ENCODE measurements at regions of chr12 and their contacts with region 1.

Region 1: GRCh38 chr12:12837025-12837872 is 24.1 kb downstream of the DDX47 start:
- DNase-seq: peak; percentile 83
- H3K4me3 Mint-ChIP-seq: no peak overlapping the region
- H3K27ac Mint-ChIP-seq: peak overlapping the region; percentile 30
- H3K4me1 Mint-ChIP-seq: peaks cover 56% of the 10 kb centered on the region
- H3K27me3 Mint-ChIP-seq: no peaks in the 10 kb centered on the region
- CTCF ChIP-seq: peak; percentile 62

Region 2: DNA sequence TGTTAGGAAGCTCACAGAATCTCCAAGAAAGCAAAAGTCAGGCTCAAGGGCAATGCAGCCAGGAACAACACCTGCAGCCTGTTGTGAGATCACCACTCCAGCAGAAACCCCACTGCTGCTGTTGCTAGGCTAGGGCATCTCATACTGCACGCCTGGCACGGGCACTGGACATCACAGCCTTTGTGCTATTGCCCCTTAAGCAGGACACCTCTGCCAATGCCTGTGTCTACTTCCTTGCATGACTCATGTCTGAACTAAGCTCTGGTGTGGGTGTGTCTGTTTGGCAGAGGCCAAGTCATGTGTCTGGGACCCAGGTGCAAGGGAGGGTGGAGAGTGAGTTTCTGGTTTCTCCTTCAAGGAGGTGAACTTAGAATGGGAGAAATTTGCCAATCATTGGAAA is 34.1 kb before region 1 on chr12:
- CTCF ChIA-PET with region 1: interaction called, 21 read pairs
- POLR2A ChIA-PET with region 1: interaction called, 27 read pairs
- intact Hi-C with region 1: no loop called
- DNase-seq: peak; percentile 99
- H3K4me3 Mint-ChIP-seq: peak overlapping the region; percentile 11
- H3K27ac Mint-ChIP-seq: peak overlapping the region; percentile 67
- H3K4me1 Mint-ChIP-seq: peaks cover 48% of the 10 kb centered on the region
- H3K27me3 Mint-ChIP-seq: no peaks in the 10 kb centered on the region
- CTCF ChIP-seq: no peak

Region 3: GRCh38 chr12:12872139-12872881 is 35.1 kb after region 1 on chr12:
- CTCF ChIA-PET with region 1: interaction called, 8 read pairs
- POLR2A ChIA-PET with region 1: interaction called, 22 read pairs
- intact Hi-C with region 1: no loop called
- DNase-seq: peak; percentile 49
- H3K4me3 Mint-ChIP-seq: no peak overlapping the region
- H3K27ac Mint-ChIP-seq: peak overlapping the region; percentile 77
- H3K4me1 Mint-ChIP-seq: peaks cover 32% of the 10 kb centered on the region
- H3K27me3 Mint-ChIP-seq: no peaks in the 10 kb centered on the region
- CTCF ChIP-seq: no peak

Region 4: DNA sequence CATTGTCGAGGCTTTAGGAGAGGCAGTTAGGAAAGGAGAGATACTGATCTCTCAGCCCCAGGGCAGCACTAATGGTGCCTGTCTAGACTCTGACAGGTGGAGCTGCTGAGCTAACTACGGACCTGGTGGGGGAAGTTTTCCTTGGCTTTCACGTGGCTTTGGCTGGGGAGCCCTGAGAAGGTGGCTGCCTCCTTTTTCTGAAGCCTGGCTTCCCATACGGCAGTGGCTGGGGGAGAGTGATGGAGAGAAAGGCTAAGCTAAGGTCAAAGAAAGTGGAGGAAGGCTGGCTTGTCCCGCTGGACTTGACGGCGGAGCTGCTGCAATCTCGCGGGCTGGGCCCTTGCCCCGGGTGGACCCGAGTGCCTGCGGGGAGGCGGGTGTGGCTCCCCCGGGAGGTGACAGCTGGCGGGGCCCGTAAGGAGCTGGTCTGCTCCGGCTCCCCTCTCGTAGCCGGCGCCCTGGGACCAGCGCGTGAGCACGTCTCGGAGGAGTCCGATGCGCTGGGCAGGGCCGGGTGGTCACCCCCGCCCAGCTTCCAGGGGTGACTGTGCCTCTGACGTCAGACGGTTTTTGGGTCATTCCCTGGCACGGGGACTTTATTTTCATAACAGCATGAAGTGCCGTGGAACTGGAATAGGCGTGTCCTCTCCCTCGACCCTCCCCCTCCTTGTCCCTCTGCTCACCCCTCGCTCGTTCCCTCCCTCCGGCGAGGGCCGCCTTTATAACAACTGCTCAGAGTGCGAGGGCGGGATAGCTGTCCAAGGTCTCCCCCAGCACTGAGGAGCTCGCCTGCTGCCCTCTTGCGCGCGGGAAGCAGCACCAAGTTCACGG is 53.8 kb after region 1 on chr12 and contains the start of gene GPRC5A:
- CTCF ChIA-PET with region 1: interaction called, 61 read pairs
- POLR2A ChIA-PET with region 1: interaction called, 123 read pairs
- intact Hi-C with region 1: loop called (anchors 1 kb)
- DNase-seq: peak; percentile 97
- H3K4me3 Mint-ChIP-seq: peak within 1 kb of the TSS; percentile 82
- H3K27ac Mint-ChIP-seq: peak within 1 kb of the TSS; percentile 87
- H3K4me1 Mint-ChIP-seq: peaks cover 31% of the 10 kb centered on the region
- H3K27me3 Mint-ChIP-seq: no peaks in the 10 kb centered on the region
- CTCF ChIP-seq: peak; percentile 30
- total RNA-seq, gene GPRC5A: 24.1 and 42.1 TPM in 2 replicates

Region 5: DNA sequence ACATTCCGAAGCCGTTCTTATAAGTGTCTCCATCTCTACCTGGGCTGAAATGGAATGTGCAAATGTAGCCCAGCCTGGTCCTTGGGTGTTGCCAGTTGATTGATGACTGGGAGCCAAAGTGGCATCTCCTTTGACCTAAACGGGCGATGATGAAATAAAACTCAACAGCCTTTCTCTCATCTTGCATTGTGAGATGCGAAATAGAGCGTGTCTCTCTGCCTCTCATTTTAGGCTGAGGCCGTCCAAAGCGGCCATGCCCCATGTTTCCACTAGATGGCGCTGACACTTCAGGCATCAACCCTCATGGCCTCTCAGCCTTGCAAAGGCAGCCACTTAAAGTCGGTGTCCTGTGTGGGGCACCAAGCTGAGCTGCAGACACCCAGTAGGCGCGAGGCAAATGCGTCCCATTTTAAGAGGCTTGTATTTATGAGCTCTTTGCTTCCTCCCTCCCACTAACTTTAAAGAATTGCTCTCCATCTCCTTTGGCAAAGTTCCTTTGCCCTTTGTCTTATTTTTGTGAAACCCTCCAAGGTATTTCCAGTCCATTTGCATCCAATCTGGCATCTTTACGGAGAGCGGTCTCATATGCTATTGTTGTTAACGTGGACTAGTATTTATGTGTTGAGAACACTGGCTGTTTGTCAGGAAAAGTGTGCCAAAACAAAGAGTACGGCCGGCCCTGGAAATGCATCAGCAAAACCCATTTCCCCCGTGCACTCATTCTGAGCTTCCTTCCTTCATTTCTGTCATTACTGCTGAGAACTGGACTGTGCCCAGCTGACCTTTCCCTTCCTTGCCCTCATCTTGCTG is 79.1 kb after region 1 on chr12:
- CTCF ChIA-PET with region 1: interaction called, 27 read pairs
- POLR2A ChIA-PET with region 1: no interaction called
- intact Hi-C with region 1: no loop called
- DNase-seq: peak; percentile 83
- H3K4me3 Mint-ChIP-seq: no peak overlapping the region
- H3K27ac Mint-ChIP-seq: no peak overlapping the region
- H3K4me1 Mint-ChIP-seq: no peaks in the 10 kb centered on the region
- H3K27me3 Mint-ChIP-seq: no peaks in the 10 kb centered on the region
- CTCF ChIP-seq: peak; percentile 92

Region 6: DNA sequence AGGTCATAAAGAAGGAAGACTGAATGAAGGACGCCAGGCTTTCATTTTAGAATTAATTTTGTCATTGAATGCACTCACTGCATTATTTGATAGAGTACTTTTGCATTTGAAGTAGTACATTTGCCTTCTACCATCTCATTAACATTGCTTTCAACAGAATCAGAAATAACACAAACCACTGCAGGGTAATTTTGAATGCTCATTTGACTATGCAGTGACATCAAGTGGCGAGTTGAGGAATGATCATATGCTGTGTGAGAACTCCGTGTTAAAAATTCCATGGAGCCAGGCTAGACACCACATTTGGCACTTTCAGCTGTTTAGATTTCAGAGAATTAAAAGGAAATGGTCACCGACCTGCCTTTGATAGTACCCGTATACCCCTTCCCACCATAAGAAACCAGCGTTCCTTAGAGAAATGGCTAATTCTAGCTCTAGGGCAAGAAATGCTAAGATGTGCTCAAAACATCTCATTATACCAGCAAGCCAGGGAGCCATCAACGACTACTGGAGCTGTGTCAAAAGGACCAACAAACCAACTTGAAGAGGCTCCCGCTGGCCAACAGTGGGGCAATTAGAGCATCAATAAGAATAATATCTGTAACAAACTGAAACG is 146.3 kb after region 1 on chr12:
- CTCF ChIA-PET with region 1: interaction called, 21 read pairs
- POLR2A ChIA-PET with region 1: interaction called, 6 read pairs
- intact Hi-C with region 1: loop called (anchors 5 kb)
- DNase-seq: peak; percentile 65
- H3K4me3 Mint-ChIP-seq: no peak overlapping the region
- H3K27ac Mint-ChIP-seq: peak overlapping the region; percentile 0
- H3K4me1 Mint-ChIP-seq: peaks cover 6% of the 10 kb centered on the region
- H3K27me3 Mint-ChIP-seq: no peaks in the 10 kb centered on the region
- CTCF ChIP-seq: peak; percentile 66